Mammary epithelial cell (primary cell): ENCODE measurements at regions of chr16 and their contacts with region 1.

Region 1: DNA sequence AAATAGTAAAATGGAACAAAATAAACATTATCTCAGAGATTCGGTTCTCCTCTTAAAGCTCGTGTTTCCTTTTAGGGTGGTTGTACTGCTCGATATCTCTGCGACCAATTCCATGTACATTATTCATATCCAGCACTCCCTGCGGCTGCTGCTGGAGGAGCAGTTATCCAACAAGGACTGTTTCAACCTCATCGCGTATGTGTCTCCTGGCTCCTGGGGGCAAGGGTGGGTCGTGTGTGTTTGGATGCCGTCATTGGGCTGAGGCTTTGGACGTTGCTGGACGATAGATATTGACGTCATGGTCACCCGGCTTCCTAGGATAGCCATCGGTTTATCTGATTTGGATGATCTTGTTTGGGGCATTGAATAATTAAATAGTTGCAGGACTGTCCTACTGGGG is 33.8 kb downstream of the VWA3A start:
- DNase-seq: no peak
- H3K4me3 ChIP-seq: no peak overlapping the region
- H3K27ac ChIP-seq: no peak overlapping the region
- H3K4me1 ChIP-seq: no peaks in the 10 kb centered on the region
- H3K27me3 ChIP-seq: peaks cover 2% of the 10 kb centered on the region
- CTCF ChIP-seq: no peak

Region 2: GRCh38 chr16:21989133-21989532 is 137.0 kb before region 1 on chr16:
- CTCF ChIA-PET with region 1: interaction called, 12 read pairs
- dilution Hi-C with region 1: no loop called
- in situ Hi-C with region 1: no loop called
- intact Hi-C with region 1: no loop called
- DNase-seq: no peak
- H3K4me3 ChIP-seq: no peak overlapping the region
- H3K27ac ChIP-seq: no peak overlapping the region
- H3K4me1 ChIP-seq: peaks cover 6% of the 10 kb centered on the region
- H3K27me3 ChIP-seq: no peaks in the 10 kb centered on the region
- CTCF ChIP-seq: no peak

Region 3: GRCh38 chr16:22220069-22220440 is 94.0 kb after region 1 on chr16:
- CTCF ChIA-PET with region 1: no interaction called
- dilution Hi-C with region 1: no loop called
- in situ Hi-C with region 1: no loop called
- intact Hi-C with region 1: no loop called
- DNase-seq: no peak
- H3K4me3 ChIP-seq: no peak overlapping the region
- H3K27ac ChIP-seq: no peak overlapping the region
- H3K4me1 ChIP-seq: no peaks in the 10 kb centered on the region
- H3K27me3 ChIP-seq: no peaks in the 10 kb centered on the region
- CTCF ChIP-seq: no peak